Naive thymus-derived CD4-positive, alpha-beta T cell (primary cell): ENCODE measurements at regions of chr9 and their contacts with region 1.

Region 1: GRCh38 chr9:121133149-121133816 is 58.5 kb downstream of the CNTRL start:
- DNase-seq: peak; percentile 39 to 88 (median 79)
- ATAC-seq: peak; percentile 99
- H3K4me3 ChIP-seq: peak overlapping the region; percentile 51
- H3K4me3 Mint-ChIP-seq: peak overlapping the region; percentile 21 to 82 (median 74)
- H3K27ac ChIP-seq: peak overlapping the region; percentile 46
- H3K27ac Mint-ChIP-seq: peak overlapping the region; percentile 76 to 99 (median 90)
- H3K4me1 ChIP-seq: peaks cover 23 to 40% of the 10 kb centered on the region in 2 donors
- H3K4me1 Mint-ChIP-seq: peaks cover 48 to 90% (median 82%) of the 10 kb centered on the region in 7 donors
- H3K27me3 ChIP-seq: no peaks in the 10 kb centered on the region
- H3K27me3 Mint-ChIP-seq: no peaks in the 10 kb centered on the region

Region 2: DNA sequence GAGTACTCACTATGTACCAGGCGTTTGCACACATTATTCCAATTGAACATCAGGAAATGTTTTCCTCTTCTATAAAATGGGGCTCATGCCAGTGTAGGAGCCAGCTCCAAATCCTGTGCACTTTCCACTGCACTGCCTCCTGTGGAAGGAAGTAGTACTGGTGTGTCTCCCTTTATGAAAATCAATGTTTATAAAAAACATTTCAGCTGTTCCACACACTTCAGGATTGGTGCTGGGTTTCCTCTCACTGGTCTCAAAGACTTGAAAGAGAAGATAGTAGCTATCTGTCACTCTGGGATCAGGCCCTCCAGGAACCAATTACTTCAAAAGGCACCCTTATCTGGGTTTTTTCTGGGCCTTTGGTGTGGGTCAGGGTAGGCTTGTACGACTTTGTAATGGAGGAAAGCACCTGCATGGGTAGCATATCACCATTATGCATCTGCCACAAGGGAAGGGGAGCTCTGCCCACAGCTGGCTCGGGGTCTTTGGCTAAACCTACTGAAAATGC is 35.9 kb after region 1 on chr9:
- CTCF ChIA-PET with region 1: interaction called, 11 read pairs
- POLR2A ChIA-PET with region 1: interaction called, 6 read pairs
- intact Hi-C with region 1: no loop called
- DNase-seq: peak in 7 of 9 donors; percentile 20 to 46 (median 41)
- ATAC-seq: peak; percentile 85
- H3K4me3 ChIP-seq: no peak overlapping the region
- H3K4me3 Mint-ChIP-seq: peak overlapping the region in 7 of 10 donors; percentile 21 to 70 (median 53)
- H3K27ac ChIP-seq: peak overlapping the region; percentile 67
- H3K27ac Mint-ChIP-seq: peak overlapping the region; percentile 38 to 94 (median 84)
- H3K4me1 ChIP-seq: peaks cover 0 to 23% of the 10 kb centered on the region in 2 donors
- H3K4me1 Mint-ChIP-seq: peaks cover 10 to 29% (median 25%) of the 10 kb centered on the region in 7 donors
- H3K27me3 ChIP-seq: no peaks in the 10 kb centered on the region
- H3K27me3 Mint-ChIP-seq: no peaks in the 10 kb centered on the region

Region 3: DNA sequence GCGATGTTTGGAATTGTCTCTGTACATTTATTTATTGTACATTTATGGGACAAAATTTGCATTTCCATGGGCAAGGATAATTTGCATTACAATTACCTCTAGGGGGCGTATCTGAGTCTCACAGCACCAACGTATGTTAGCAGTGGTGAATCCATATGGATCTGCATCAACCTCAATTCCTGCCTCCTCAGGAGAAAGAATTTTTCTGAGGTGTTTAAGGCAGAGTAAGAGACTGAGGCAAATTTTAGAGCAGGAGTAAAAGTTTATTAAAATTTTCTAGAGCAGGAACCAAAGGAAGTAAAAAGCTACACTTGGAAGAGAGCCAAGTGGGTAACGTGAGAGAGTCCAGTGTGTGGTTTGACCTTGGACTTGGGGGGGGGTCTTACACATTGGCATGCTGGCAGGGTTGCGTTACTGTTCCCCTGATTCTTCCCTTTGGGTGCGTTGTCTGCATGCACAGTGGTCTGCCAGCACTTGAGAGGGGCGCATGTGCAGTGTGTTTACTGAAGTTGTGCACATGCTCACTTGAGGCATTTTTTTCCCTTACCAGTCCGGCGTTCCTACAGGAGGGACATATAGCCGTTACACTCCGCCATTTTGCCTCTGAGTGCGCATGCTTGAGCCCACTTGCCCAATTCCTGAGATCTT is 89.4 kb after region 1 on chr9:
- CTCF ChIA-PET with region 1: no interaction called
- POLR2A ChIA-PET with region 1: no interaction called
- intact Hi-C with region 1: no loop called
- DNase-seq: no peak
- ATAC-seq: no peak
- H3K4me3 ChIP-seq: no peak overlapping the region
- H3K4me3 Mint-ChIP-seq: no peak overlapping the region
- H3K27ac ChIP-seq: no peak overlapping the region
- H3K27ac Mint-ChIP-seq: no peak overlapping the region
- H3K4me1 ChIP-seq: no peaks in the 10 kb centered on the region
- H3K4me1 Mint-ChIP-seq: peaks cover 0 to 3% (median 0%) of the 10 kb centered on the region in 7 donors
- H3K27me3 ChIP-seq: no peaks in the 10 kb centered on the region
- H3K27me3 Mint-ChIP-seq: no peaks in the 10 kb centered on the region